Activated CD4-positive, alpha-beta memory T cell treated with anti-CD3 and anti-CD28 coated beads for 36 hours (primary cell): ENCODE measurements at regions of chr7 and their contacts with region 1.

Region 1: GRCh38 chr7:107168233-107169119 is at the start of gene HBP1:
- DNase-seq: peak; percentile 99
- H3K4me3 Mint-ChIP-seq: peak within 1 kb of the TSS; percentile 96
- H3K27ac Mint-ChIP-seq: peak within 1 kb of the TSS; percentile 97
- H3K4me1 Mint-ChIP-seq: peaks cover 32% of the 10 kb centered on the region
- H3K27me3 Mint-ChIP-seq: peaks cover 2% of the 10 kb centered on the region
- total RNA-seq, gene HBP1: 24.3 to 26.7 TPM

Region 2: DNA sequence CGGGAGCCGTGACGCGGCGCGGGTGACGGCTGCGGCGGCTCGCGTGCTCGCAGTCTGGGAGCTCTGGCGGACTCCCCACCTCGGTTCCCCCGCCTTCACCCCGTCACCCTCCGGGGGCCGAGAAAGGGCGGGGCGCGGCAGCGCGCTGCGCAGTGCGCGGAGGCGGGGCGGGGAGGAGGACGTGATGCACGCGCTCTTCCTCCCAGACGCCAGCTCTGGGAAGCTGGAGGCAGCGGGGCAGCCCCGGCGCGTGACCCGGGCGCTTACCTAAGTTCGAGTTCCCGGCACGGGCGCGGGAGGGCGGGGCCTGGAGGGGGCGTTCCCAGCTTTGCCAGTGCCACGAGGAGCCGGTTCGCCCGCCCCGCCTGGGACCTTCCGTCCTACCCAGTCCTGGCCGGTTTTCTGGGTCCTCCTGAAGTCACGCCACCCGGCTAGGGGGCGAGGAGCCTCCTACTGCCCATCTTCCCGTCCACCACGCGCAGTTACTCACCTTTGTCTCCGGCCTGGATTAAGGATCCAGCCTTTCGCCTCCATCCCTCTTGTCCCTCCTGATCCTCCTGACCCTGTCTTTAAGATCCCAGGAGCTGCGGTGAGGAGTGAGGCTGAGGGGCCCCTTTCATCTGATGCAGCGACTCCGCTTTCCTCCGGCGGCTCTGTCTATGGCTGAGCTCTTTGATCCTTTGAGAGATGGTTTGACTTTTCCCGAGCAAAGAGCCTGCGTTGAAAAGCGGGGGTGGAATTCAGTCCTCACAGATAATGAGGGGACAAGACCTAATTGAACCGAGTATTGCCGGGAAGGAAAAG is 883.2 kb before region 1 on chr7:
- CTCF ChIA-PET with region 1: no interaction called
- POLR2A ChIA-PET with region 1: interaction called, 14 read pairs
- intact Hi-C with region 1: loop called (anchors 1 kb)
- DNase-seq: peak; percentile 100
- H3K4me3 Mint-ChIP-seq: peak overlapping the region; percentile 92
- H3K27ac Mint-ChIP-seq: peak overlapping the region; percentile 99
- H3K4me1 Mint-ChIP-seq: peaks cover 50% of the 10 kb centered on the region
- H3K27me3 Mint-ChIP-seq: peaks cover 2% of the 10 kb centered on the region

Region 3: GRCh38 chr7:106717955-106718871 is 450.3 kb before region 1 on chr7:
- CTCF ChIA-PET with region 1: no interaction called
- POLR2A ChIA-PET with region 1: interaction called, 3 read pairs
- intact Hi-C with region 1: loop called (anchors 1 kb)
- DNase-seq: peak; percentile 90
- H3K4me3 Mint-ChIP-seq: no peak overlapping the region
- H3K27ac Mint-ChIP-seq: no peak overlapping the region
- H3K4me1 Mint-ChIP-seq: peaks cover 12% of the 10 kb centered on the region
- H3K27me3 Mint-ChIP-seq: no peaks in the 10 kb centered on the region

Region 4: GRCh38 chr7:107130487-107131225 is 37.8 kb before region 1 on chr7:
- CTCF ChIA-PET with region 1: interaction called, 3 read pairs
- POLR2A ChIA-PET with region 1: interaction called, 9 read pairs
- intact Hi-C with region 1: loop called (anchors 1 kb)
- DNase-seq: no peak
- H3K4me3 Mint-ChIP-seq: no peak overlapping the region
- H3K27ac Mint-ChIP-seq: no peak overlapping the region
- H3K4me1 Mint-ChIP-seq: peaks cover 9% of the 10 kb centered on the region
- H3K27me3 Mint-ChIP-seq: no peaks in the 10 kb centered on the region

Region 5: DNA sequence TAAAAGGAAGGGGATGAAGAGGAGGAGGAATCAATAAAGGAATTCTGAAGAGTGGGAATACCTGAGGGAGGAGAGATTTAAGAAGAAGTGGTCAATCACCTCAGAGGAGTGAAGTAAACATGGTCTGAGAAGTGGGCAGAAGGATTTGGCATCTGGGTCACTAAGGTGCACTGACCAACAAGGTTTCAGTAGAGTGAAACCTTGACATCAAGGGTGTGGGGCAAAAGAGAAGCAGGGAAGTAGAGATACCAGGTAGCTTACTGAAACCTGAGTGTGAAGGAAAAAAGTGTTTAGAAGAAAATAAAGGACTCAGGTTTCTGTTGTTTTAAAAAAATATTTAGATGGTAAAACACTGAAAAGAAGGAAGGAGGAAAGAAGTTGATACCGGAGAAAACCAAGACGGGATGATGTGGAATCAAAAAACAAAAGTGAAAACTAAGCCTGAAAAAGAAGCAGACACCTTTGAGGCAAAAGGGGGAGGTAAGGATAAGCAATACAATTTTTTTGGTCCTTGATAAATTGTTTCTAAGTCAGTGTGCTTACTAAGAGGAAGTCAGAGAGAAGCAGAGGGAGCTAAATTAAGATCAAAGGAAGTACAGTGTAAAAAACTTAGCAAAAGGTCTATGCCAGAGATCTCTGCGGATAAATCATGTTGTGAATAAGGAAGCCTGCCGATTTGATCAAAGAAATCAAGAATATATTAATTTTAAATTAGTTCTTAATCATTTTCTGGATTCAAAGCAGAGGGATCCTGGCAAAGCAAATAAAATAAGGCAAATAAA is 164.2 kb after region 1 on chr7:
- CTCF ChIA-PET with region 1: no interaction called
- POLR2A ChIA-PET with region 1: no interaction called
- intact Hi-C with region 1: no loop called
- DNase-seq: no peak
- H3K4me3 Mint-ChIP-seq: no peak overlapping the region
- H3K27ac Mint-ChIP-seq: no peak overlapping the region
- H3K4me1 Mint-ChIP-seq: peaks cover 11% of the 10 kb centered on the region
- H3K27me3 Mint-ChIP-seq: no peaks in the 10 kb centered on the region

Region 6: DNA sequence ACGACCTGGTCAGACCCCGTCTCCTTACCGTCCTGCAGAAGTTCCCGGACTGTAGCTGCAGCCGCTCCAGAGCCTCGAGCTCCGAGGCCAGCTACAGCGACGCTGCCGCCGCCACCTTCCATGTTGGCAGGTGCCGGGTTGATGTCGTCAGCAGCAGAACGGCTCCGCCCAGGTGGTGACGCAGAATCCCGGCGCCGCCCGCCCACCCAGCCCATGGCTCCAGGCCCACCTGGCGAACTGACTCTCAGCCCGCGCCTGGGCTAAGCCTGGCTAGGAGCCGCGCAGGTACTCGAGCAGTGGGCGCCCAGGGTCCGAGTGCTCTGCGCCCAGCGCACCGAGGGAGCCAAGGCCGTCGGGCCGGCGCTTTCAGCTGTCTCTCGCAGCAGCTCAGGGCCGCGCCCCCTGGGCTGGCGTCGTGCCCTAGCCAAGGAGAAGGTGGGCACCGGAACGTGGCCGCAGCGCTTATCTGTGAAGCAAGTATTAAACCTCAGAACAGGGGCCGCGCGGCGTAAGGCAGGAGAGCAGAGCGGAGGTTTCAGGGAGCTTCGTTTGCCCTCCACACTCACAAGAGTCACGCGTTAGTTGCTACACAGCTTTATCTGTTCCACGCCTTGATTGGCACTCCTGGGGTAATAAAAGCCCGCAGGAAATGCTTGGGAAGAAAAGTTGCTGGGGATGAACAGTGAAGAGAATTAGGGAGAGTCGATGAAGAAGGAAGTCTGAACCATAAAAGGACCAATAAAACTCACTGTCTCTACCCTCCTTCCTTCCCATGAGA is 395.5 kb after region 1 on chr7 and contains the starts of genes COG5 and DUS4L:
- CTCF ChIA-PET with region 1: interaction called, 4 read pairs
- POLR2A ChIA-PET with region 1: interaction called, 8 read pairs
- intact Hi-C with region 1: loop called (anchors 1 kb)
- DNase-seq: peak; percentile 92
- H3K4me3 Mint-ChIP-seq: peak within 1 kb of the TSS; percentile 92
- H3K27ac Mint-ChIP-seq: peak within 1 kb of the TSS; percentile 90
- H3K4me1 Mint-ChIP-seq: peaks cover 57% of the 10 kb centered on the region
- H3K27me3 Mint-ChIP-seq: no peaks in the 10 kb centered on the region
- total RNA-seq, gene COG5: 38.9 to 40.7 TPM
- total RNA-seq, gene DUS4L: 11.8 to 12.4 TPM

Region 7: GRCh38 chr7:107816011-107816566 is 647.6 kb after region 1 on chr7:
- CTCF ChIA-PET with region 1: no interaction called
- POLR2A ChIA-PET with region 1: no interaction called
- intact Hi-C with region 1: loop called (anchors 5 kb)
- DNase-seq: no peak
- H3K4me3 Mint-ChIP-seq: no peak overlapping the region
- H3K27ac Mint-ChIP-seq: peak overlapping the region; percentile 64
- H3K4me1 Mint-ChIP-seq: peaks cover 31% of the 10 kb centered on the region
- H3K27me3 Mint-ChIP-seq: no peaks in the 10 kb centered on the region

Region 8: DNA sequence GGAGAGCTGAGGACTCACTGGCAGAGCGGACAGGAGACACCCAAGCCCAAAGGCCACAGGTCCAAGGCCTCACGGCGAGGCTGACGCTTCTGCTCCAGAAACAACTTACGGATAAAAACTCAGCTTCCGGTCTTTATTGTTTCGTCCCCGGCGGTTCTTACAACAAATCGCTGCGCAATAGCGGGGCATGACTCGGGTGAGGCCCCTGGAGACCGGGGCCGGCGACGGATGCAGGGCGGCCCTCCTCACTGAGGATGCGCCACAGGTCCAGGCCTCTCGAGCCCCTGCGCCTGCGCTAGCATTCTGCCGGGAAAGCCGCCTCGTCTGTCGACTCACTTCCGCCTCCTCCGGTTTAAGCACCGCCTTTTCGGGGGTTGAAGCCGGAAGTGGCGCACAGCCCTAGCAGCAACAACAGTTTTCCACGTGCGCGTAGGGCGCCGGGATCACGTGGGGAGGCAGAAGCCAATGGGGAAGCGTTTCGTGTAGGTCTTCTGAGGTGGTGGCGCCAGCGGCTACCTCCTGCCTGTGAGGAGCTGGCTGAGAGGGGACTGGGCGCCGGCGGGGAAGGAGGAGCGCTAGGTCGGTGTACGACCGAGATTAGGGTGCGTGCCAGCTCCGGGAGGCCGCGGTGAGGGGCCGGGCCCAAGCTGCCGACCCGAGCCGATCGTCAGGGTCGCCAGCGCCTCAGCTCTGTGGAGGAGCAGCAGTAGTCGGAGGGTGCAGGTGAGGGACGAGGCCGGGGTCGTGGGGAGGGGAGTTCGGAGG is 1401.1 kb after region 1 on chr7 and contains the starts of genes DNAJB9 and THAP5:
- CTCF ChIA-PET with region 1: no interaction called
- POLR2A ChIA-PET with region 1: no interaction called
- intact Hi-C with region 1: loop called (anchors 1 kb)
- DNase-seq: peak; percentile 100
- H3K4me3 Mint-ChIP-seq: peak within 1 kb of the TSS; percentile 98
- H3K27ac Mint-ChIP-seq: peak within 1 kb of the TSS; percentile 99
- H3K4me1 Mint-ChIP-seq: peaks cover 43% of the 10 kb centered on the region
- H3K27me3 Mint-ChIP-seq: no peaks in the 10 kb centered on the region
- total RNA-seq, gene DNAJB9: 10.8 to 12.6 TPM
- total RNA-seq, gene THAP5: 26.5 to 30.4 TPM